Natural killer cell (primary cell): ENCODE measurements at regions of chr4 and their contacts with region 1.

Region 1: GRCh38 chr4:185640811-185641675 is 105.7 kb upstream of the PDLIM3 start:
- DNase-seq: peak in 1 of 2 donors; percentile 38
- ATAC-seq: no peak
- H3K4me3 ChIP-seq: no peak overlapping the region
- H3K4me3 Mint-ChIP-seq: no peak overlapping the region
- H3K27ac ChIP-seq: no peak overlapping the region
- H3K27ac Mint-ChIP-seq: no peak overlapping the region
- H3K4me1 ChIP-seq: no peaks in the 10 kb centered on the region
- H3K4me1 Mint-ChIP-seq: no peaks in the 10 kb centered on the region
- H3K27me3 ChIP-seq: peaks cover 7% of the 10 kb centered on the region
- H3K27me3 Mint-ChIP-seq: peaks cover 13 to 31% of the 10 kb centered on the region in 2 donors
- CTCF ChIP-seq: peak; percentile 28

Region 2: GRCh38 chr4:185033950-185034349 is 607.1 kb before region 1 on chr4:
- intact Hi-C with region 1: no loop called
- DNase-seq: no peak
- ATAC-seq: no peak
- H3K4me3 ChIP-seq: no peak overlapping the region
- H3K4me3 Mint-ChIP-seq: no peak overlapping the region
- H3K27ac ChIP-seq: no peak overlapping the region
- H3K27ac Mint-ChIP-seq: no peak overlapping the region
- H3K4me1 ChIP-seq: no peaks in the 10 kb centered on the region
- H3K4me1 Mint-ChIP-seq: no peaks in the 10 kb centered on the region
- H3K27me3 ChIP-seq: peaks cover 2% of the 10 kb centered on the region
- H3K27me3 Mint-ChIP-seq: peaks cover 28 to 50% of the 10 kb centered on the region in 2 donors
- CTCF ChIP-seq: no peak

Region 3: DNA sequence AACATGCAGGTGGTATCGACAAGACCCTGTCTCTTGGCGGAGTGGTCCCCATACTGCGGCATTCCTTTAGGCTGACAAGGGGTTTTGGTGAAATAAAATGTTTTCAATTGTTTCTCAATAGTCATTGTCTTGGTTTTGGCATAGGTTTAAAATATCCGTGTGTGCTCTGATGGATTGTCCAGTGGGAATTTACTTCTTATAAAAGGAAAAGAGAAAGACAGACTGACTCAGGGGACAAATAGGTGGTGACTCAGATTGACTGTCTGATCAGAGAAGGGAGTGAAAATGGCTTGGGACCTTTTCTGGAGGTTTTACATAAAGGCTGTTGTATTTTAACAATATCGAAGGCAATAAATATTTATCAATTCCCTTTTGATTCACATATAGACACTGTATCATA is 41.2 kb after region 1 on chr4:
- intact Hi-C with region 1: no loop called
- DNase-seq: no peak
- ATAC-seq: no peak
- H3K4me3 ChIP-seq: no peak overlapping the region
- H3K4me3 Mint-ChIP-seq: no peak overlapping the region
- H3K27ac ChIP-seq: no peak overlapping the region
- H3K27ac Mint-ChIP-seq: no peak overlapping the region
- H3K4me1 ChIP-seq: no peaks in the 10 kb centered on the region
- H3K4me1 Mint-ChIP-seq: no peaks in the 10 kb centered on the region
- H3K27me3 ChIP-seq: no peaks in the 10 kb centered on the region
- H3K27me3 Mint-ChIP-seq: peaks cover 5 to 17% of the 10 kb centered on the region in 2 donors
- CTCF ChIP-seq: no peak

Region 4: GRCh38 chr4:186021461-186022167 is 380.6 kb after region 1 on chr4:
- intact Hi-C with region 1: loop called (anchors 5 kb)
- DNase-seq: no peak
- ATAC-seq: peak in 1 of 3 donors; percentile 46
- H3K4me3 ChIP-seq: no peak overlapping the region
- H3K4me3 Mint-ChIP-seq: no peak overlapping the region
- H3K27ac ChIP-seq: no peak overlapping the region
- H3K27ac Mint-ChIP-seq: no peak overlapping the region
- H3K4me1 ChIP-seq: no peaks in the 10 kb centered on the region
- H3K4me1 Mint-ChIP-seq: no peaks in the 10 kb centered on the region
- H3K27me3 ChIP-seq: no peaks in the 10 kb centered on the region
- H3K27me3 Mint-ChIP-seq: peaks cover 23 to 41% of the 10 kb centered on the region in 2 donors
- CTCF ChIP-seq: no peak

Region 5: DNA sequence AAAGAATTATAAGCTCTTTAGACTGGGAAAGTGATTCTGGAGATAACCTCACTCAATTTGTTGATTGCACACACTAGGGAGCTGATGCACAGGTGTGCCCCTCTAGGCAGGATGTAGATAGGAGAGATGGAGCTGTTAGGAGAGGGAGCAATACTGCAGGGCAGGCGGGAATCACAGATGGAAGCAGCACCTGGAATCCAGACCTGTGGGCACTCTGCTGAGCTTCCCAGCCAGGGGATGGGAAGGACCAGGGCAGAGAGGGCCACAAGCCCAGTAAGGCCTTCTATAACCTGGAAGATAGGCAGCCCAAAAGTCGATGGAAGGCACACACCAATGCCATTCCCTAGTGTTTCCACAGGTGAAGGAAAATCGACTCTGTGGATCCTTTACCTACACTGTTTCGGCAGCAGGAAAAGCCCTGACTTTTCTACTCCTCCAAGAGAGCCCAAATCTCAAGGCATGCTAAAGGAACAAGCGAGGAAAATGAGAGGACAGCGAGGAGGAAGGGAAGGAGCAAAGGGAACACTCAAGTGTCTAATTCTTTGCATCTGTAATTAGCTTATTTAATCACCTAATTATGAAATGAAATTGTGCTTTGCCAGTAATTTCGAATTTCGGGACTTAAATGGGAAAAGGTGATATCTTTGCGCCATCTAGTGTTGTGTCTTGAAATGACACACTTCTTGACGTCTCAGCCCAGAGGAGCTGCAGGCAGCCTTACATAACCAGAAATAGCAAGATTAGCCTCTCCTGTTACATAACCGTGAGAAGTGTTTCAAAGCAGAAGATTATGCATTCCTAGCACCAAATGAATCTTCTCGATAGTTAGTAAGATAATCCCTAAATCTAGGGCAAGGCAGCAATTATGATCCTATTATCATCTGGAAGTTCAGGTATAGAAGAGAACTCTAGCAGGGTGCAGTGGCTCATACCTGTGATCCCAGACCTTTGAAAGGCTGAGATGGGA is 396.9 kb after region 1 on chr4:
- intact Hi-C with region 1: loop called (anchors 1 kb)
- DNase-seq: peak in 1 of 2 donors; percentile 65
- ATAC-seq: peak; percentile 70 to 79 (median 72)
- H3K4me3 ChIP-seq: no peak overlapping the region
- H3K4me3 Mint-ChIP-seq: peak overlapping the region; percentile 26
- H3K27ac ChIP-seq: no peak overlapping the region
- H3K27ac Mint-ChIP-seq: no peak overlapping the region
- H3K4me1 ChIP-seq: no peaks in the 10 kb centered on the region
- H3K4me1 Mint-ChIP-seq: no peaks in the 10 kb centered on the region
- H3K27me3 ChIP-seq: no peaks in the 10 kb centered on the region
- H3K27me3 Mint-ChIP-seq: peaks cover 14 to 30% of the 10 kb centered on the region in 2 donors
- CTCF ChIP-seq: peak; percentile 84